ENCODE measurements at regions of chr4 and their contacts with region 1.

Region 1: DNA sequence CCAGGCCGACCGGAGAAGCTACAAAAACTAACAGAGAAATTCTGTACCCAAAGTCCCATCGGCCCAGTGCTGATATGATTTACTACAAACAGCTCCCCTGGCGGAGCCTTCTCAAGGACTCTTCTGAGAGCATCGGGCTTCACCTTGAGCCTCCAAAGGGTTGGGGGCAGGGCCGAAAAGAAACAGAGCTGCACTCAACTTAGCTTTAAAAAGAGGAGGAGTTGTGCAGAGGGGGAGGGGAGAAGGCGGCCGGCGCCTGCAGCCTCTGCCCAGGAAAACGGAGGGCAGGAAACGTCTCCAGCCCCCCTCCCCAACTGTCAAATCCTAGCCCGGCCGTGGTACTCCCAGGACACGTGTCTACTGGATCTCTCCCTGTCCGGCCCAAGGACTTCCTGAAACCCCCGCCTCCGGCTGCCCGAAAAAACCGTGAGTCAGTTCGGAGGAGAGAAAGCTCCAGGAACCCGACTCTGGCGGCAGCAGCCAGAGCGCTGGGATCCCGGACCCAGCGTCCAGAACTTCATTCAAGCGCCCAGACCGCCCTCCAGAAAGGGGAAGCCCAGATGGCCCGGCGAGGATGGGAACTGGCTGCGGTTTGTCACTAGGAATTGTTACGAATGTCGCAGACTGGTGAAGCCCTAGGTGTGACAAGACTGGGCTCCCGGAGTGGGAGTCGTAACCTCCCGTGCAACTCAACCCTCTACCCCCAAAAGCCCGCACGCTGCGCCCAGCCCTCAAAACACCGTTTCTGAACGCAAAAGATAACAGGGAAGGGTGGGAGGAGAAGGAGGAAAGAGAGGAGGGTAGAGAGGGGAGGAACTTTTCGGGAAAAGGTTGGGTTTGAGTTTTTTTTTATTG is 973 bp downstream of the ADAMTS3 start:
- DNase-seq: peak; percentile 71 to 97 (median 80)
- ATAC-seq: peak; percentile 78
- H3K4me3 ChIP-seq: peak overlapping the region; percentile 60
- H3K27ac ChIP-seq: peak overlapping the region; percentile 97
- H3K4me1 ChIP-seq: peaks cover 14 to 39% of the 10 kb centered on the region in 2 experiments
- H3K27me3 ChIP-seq: no peaks in the 10 kb centered on the region
- CTCF ChIP-seq: peak; percentile 59 to 64 (median 59)
- EP300 ChIP-seq: peak; percentile 71; the same call in 1 of the 2 replicates
- POLR2A ChIP-seq: peak; percentile 81
- RAD21 ChIP-seq: peak; percentile 27 to 29

Region 2: DNA sequence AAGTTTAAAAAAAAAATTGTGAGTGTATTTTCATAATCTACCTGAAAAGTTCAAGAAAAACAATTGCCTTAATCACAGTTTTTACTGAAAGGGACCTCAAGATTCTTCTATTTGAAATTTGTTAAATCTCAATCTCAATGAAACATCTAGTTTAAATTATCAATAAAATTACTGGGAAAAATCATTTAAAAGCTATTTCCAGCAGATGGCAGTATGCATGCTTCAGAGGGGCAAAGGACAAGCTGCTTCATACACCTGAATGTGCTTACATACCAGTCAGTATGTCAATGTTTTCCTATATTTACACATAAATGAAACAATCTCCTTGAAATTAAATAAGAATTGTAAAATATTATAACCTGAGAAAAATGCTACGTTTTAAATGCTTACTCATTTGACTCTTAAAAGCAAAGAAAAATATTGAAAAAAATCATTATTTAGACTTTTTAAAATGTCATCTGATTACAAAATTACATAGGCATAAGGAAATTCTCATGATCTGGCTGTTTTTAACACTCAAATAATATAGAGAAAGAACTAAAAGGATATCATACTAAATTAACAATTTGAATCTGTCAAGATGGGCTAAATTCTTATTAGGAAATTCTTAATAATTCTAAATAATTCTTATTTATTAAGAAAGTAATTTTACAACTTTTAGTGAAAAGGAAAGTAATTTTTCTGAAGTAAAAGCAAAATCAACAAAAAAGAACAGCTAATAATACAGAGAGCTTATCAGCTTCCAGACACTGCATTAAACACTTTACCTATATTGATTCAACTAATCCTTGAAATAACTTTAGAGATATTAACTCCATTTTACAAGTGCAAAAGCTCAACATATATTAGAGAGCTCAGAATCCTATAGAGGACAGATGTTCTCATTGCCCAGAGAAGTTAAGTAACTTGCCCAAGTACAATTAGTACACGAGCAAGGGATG is 241.1 kb before region 1 on chr4:
- CTCF ChIA-PET with region 1: no interaction called
- POLR2A ChIA-PET with region 1: interaction called, 5 read pairs
- in situ Hi-C with region 1: no loop called
- intact Hi-C with region 1: loop called (anchors 1 kb)
- DNase-seq: peak in 2 of 4 experiments; percentile 29 to 43
- ATAC-seq: peak; percentile 57; the same call in 2 of the 3 replicates
- H3K4me3 ChIP-seq: no peak overlapping the region
- H3K27ac ChIP-seq: no peak overlapping the region
- H3K4me1 ChIP-seq: no peaks in the 10 kb centered on the region
- H3K27me3 ChIP-seq: no peaks in the 10 kb centered on the region
- CTCF ChIP-seq: peak; percentile 50 to 70 (median 53); a peak in 4 of 6 replicates
- EP300 ChIP-seq: no peak
- POLR2A ChIP-seq: no peak
- RAD21 ChIP-seq: peak; percentile 69 to 73

Region 3: DNA sequence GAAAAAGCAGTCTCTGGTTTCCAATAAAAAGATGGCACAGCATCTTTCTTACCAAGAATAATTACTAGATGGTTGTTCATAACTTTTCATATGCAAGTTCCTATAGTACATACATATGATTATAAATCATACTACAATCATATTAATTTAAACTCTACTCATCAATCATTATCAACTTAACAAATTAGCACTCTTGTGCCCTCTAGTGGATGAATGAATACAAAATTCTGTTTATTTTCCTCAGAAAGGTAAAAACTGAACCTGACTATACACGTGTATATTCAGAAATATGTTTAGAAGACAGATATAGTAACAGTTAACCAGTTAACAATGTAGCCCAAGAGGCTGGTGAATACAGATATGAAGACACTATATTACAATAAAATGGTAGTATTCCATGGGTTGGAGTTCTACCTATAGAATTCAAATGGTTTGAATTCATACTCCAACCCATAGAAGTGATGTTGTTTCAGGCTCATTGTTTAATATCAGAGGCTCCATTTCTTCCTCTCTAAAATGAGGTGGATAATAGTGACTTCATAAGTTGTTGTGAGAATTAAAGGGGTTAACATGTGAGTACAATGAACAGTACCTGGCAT is 99.0 kb before region 1 on chr4:
- CTCF ChIA-PET with region 1: no interaction called
- POLR2A ChIA-PET with region 1: no interaction called
- in situ Hi-C with region 1: no loop called
- intact Hi-C with region 1: loop called (anchors 1 kb)
- DNase-seq: peak in 3 of 4 experiments; percentile 9 to 40 (median 10)
- ATAC-seq: no peak
- H3K4me3 ChIP-seq: no peak overlapping the region
- H3K27ac ChIP-seq: no peak overlapping the region
- H3K4me1 ChIP-seq: peaks cover 0 to 14% of the 10 kb centered on the region in 2 experiments; a peak in 2 of 5 replicates
- H3K27me3 ChIP-seq: no peaks in the 10 kb centered on the region
- CTCF ChIP-seq: peak in 2 of 3 experiments; percentile 29 to 53; a peak in 3 of 6 replicates
- EP300 ChIP-seq: no peak
- POLR2A ChIP-seq: no peak
- RAD21 ChIP-seq: peak; percentile 29 to 58; a peak in 3 of 4 replicates

Region 4: GRCh38 chr4:72484981-72485380 is 83.1 kb before region 1 on chr4:
- CTCF ChIA-PET with region 1: no interaction called
- POLR2A ChIA-PET with region 1: no interaction called
- in situ Hi-C with region 1: no loop called
- intact Hi-C with region 1: no loop called
- DNase-seq: no peak
- ATAC-seq: no peak
- H3K4me3 ChIP-seq: no peak overlapping the region
- H3K27ac ChIP-seq: no peak overlapping the region
- H3K4me1 ChIP-seq: no peaks in the 10 kb centered on the region
- H3K27me3 ChIP-seq: no peaks in the 10 kb centered on the region
- CTCF ChIP-seq: no peak
- EP300 ChIP-seq: no peak
- POLR2A ChIP-seq: no peak
- RAD21 ChIP-seq: no peak

Region 5: GRCh38 chr4:72505314-72505744 is 62.7 kb before region 1 on chr4:
- CTCF ChIA-PET with region 1: no interaction called
- POLR2A ChIA-PET with region 1: no interaction called
- in situ Hi-C with region 1: no loop called
- intact Hi-C with region 1: loop called (anchors 2 kb)
- DNase-seq: peak; percentile 22 to 57 (median 38)
- ATAC-seq: peak; percentile 96
- H3K4me3 ChIP-seq: no peak overlapping the region
- H3K27ac ChIP-seq: no peak overlapping the region
- H3K4me1 ChIP-seq: no peaks in the 10 kb centered on the region
- H3K27me3 ChIP-seq: no peaks in the 10 kb centered on the region
- CTCF ChIP-seq: peak; percentile 63 to 75 (median 68)
- EP300 ChIP-seq: no peak
- POLR2A ChIP-seq: no peak
- RAD21 ChIP-seq: peak; percentile 66 to 86

Region 6: GRCh38 chr4:72555377-72555831 is 12.6 kb before region 1 on chr4:
- CTCF ChIA-PET with region 1: no interaction called
- POLR2A ChIA-PET with region 1: interaction called, 7 read pairs
- in situ Hi-C with region 1: no loop called
- intact Hi-C with region 1: loop called (anchors 1 kb)
- DNase-seq: peak; percentile 27 to 88 (median 56)
- ATAC-seq: peak; percentile 85
- H3K4me3 ChIP-seq: no peak overlapping the region
- H3K27ac ChIP-seq: peak overlapping the region; percentile 53
- H3K4me1 ChIP-seq: peaks cover 4 to 42% of the 10 kb centered on the region in 2 experiments; a peak in 4 of 5 replicates
- H3K27me3 ChIP-seq: no peaks in the 10 kb centered on the region
- CTCF ChIP-seq: no peak
- EP300 ChIP-seq: peak; percentile 73
- POLR2A ChIP-seq: no peak
- RAD21 ChIP-seq: 0 out of 4 replicates have a peak, but pooled peaks of 1 of the 2 experiments have one; percentile 5

Region 7: DNA sequence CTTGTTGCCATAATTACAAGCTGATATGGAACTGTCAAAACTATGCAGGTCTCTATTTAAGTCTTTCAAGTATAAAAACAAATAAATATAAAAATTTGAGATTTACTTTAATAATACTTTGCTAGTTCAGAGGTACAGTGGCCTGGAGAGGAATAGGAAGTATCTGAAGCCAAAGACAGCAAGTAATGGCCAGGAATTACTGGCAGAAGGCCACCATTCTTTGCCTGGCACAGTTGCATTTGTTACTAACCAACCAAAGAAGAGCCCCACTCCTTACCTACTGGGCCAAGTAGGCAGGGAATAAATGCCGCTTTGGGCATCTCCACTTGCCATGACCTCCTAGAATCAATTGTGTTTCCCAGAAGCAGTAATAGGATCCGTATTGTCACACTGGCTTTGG is 14.8 kb after region 1 on chr4:
- CTCF ChIA-PET with region 1: no interaction called
- POLR2A ChIA-PET with region 1: interaction called, 12 read pairs
- in situ Hi-C with region 1: no loop called
- intact Hi-C with region 1: no loop called
- DNase-seq: no peak
- ATAC-seq: no peak
- H3K4me3 ChIP-seq: no peak overlapping the region
- H3K27ac ChIP-seq: no peak overlapping the region
- H3K4me1 ChIP-seq: no peaks in the 10 kb centered on the region
- H3K27me3 ChIP-seq: no peaks in the 10 kb centered on the region
- CTCF ChIP-seq: no peak
- EP300 ChIP-seq: no peak
- POLR2A ChIP-seq: no peak
- RAD21 ChIP-seq: no peak

Region 8: GRCh38 chr4:72701987-72702819 is 134.2 kb after region 1 on chr4:
- CTCF ChIA-PET with region 1: no interaction called
- POLR2A ChIA-PET with region 1: no interaction called
- in situ Hi-C with region 1: no loop called
- intact Hi-C with region 1: loop called (anchors 5 kb)
- DNase-seq: peak; percentile 33 to 77 (median 53)
- ATAC-seq: peak; percentile 82
- H3K4me3 ChIP-seq: peak overlapping the region; percentile 34
- H3K27ac ChIP-seq: no peak overlapping the region
- H3K4me1 ChIP-seq: peaks cover 0 to 28% of the 10 kb centered on the region in 2 experiments; a peak in 3 of 5 replicates
- H3K27me3 ChIP-seq: no peaks in the 10 kb centered on the region
- CTCF ChIP-seq: peak; percentile 58 to 79 (median 64); a peak in 5 of 6 replicates
- EP300 ChIP-seq: no peak
- POLR2A ChIP-seq: no peak
- RAD21 ChIP-seq: peak; percentile 84 to 87

Measured in K562 (cell line).